BJ (cell line): ENCODE measurements at regions of chr6 and their contacts with region 1.

Region 1: DNA sequence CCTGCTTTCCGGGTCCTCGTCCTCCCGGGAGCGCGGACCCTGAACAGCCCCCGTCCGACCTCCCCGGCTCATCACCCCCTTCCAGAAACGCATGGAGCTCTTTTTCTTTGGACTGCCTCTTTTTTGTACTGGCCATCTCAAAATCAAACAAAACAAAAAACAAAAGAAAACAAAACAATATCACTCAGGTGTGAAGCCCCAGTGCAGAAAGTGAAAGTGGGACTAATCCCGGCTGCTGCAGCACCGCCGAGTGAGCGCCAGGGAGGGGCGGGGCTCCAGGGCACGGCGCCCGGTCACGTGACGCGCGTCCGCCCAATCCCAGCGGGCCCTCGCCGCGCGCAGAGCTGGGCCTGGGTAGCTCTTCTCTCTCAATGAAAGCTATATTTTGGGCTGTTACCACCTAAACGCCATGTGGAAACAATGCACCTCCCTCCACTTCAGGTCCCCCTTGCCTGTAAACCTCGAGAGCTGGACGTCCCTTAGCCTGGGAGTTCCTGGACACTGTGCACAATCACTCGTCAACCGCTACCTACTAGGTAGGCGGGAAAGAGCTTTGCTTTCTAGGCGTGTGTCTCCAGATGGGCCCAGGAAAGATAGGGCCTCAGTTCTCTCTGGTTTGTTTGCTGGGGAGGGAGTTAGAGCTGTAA is 93.7 kb upstream of the PRDM1 start:
- DNase-seq: peak; percentile 19
- H3K4me3 ChIP-seq: peak overlapping the region; percentile 60
- H3K27me3 ChIP-seq: no peaks in the 10 kb centered on the region
- CTCF ChIP-seq: no peak

Region 2: DNA sequence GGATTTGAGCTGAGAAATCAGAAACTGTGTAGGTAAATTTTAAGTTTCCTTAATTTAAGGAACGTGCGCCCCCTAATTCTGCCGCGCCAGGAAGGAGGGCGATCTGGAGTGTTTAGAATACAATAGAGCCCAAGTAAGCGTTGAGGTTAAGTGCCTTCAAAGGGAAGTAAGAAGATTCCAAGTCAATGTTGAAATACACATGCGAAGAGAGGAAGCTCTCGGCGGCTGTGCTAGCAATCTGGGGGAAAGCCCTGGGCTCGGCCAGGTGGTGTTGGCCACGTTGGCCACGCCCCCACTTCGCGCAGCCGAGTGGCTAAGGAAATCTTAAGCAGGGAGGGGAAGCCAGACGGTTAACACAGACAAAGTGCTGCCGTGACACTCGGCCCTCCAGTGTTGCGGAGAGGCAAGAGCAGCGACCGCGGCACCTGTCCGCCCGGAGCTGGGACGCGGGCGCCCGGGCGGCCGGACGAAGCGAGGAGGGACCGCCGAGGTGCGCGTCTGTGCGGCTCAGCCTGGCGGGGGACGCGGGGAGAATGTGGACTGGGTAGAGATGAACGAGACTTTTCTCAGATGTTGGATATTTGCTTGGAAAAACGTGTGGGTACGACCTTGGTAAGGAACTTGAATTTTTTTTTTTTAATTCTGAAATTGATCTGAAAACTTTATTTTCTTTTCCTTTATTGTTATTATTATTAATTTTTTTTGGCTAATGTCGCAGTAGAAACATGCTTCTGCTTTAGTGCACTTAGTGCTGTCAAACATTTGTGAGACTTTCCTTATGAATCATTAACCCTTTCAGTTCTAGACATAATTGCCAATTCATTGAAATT is 93.8 kb after region 1 on chr6 and contains the start of gene PRDM1:
- CTCF ChIA-PET with region 1: interaction called, 26 read pairs
- POLR2A ChIA-PET with region 1: interaction called, 4 read pairs
- DNase-seq: no peak
- H3K4me3 ChIP-seq: peak within 1 kb of the TSS; percentile 73
- H3K27me3 ChIP-seq: no peaks in the 10 kb centered on the region
- CTCF ChIP-seq: peak; percentile 20; the same call in 1 of the 2 replicates
- polyA plus RNA-seq, gene PRDM1: 4.6 and 5.2 TPM in 2 replicates